Testis (tissue), 5 donors: ENCODE measurements at regions of chr17 and their contacts with region 1.

Region 1: GRCh38 chr17:57243171-57243948 is 13.0 kb upstream of the MSI2 start:
- DNase-seq: peak; percentile 77
- H3K4me3 ChIP-seq: no peak overlapping the region
- H3K27ac ChIP-seq: no peak overlapping the region
- H3K4me1 ChIP-seq: peaks cover 7% of the 10 kb centered on the region
- H3K27me3 ChIP-seq: no peaks in the 10 kb centered on the region
- CTCF ChIP-seq: peak; percentile 93 to 98 (median 94)
- POLR2A ChIP-seq: no peak

Region 2: DNA sequence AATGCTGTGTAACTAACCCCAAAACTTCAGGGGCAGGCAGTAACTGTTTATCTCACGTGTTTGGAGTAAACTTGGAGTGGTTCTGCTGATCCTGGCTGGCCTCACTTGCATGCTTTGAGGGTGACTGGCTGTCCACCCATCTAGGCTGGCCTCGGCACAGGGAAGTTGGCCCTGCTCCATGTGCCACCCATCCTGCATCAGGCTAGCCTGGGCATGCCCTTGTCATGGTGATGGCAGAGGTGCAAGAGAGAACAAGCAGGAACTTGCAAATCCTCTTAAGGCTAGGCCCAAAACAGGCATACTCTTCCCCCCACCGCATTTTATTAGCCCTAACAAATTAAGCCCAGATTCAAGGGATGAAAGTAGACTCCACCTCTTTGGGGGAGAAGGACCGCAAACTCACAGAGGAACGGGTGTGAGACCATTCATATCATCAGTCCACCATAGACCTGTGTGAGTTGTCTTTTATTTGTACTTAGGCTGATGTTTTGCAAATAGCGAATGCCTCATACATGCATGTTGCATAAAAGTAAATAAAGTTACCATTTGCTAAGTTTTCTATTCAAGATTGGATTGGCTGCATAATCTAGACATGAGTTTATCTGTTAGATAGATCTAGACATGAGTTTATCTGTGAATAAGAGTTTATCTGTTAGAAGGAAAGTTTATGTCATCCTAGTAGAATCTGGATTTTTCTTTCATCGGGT is 280.7 kb after region 1 on chr17:
- intact Hi-C with region 1: no loop called
- DNase-seq: no peak
- H3K4me3 ChIP-seq: no peak overlapping the region
- H3K27ac ChIP-seq: no peak overlapping the region
- H3K4me1 ChIP-seq: peaks cover 24% of the 10 kb centered on the region
- H3K27me3 ChIP-seq: no peaks in the 10 kb centered on the region
- CTCF ChIP-seq: no peak
- POLR2A ChIP-seq: no peak

Region 3: GRCh38 chr17:57671667-57672632 is 428.6 kb after region 1 on chr17:
- intact Hi-C with region 1: loop called (anchors 10 kb)
- DNase-seq: peak; percentile 79
- H3K4me3 ChIP-seq: no peak overlapping the region
- H3K27ac ChIP-seq: no peak overlapping the region
- H3K4me1 ChIP-seq: no peaks in the 10 kb centered on the region
- H3K27me3 ChIP-seq: no peaks in the 10 kb centered on the region
- CTCF ChIP-seq: peak; percentile 70 to 83 (median 82)
- POLR2A ChIP-seq: no peak